Right ventricle myocardium inferior (tissue), 1 donor: ENCODE measurements at regions of chr2 and their contacts with region 1.

Region 1: DNA sequence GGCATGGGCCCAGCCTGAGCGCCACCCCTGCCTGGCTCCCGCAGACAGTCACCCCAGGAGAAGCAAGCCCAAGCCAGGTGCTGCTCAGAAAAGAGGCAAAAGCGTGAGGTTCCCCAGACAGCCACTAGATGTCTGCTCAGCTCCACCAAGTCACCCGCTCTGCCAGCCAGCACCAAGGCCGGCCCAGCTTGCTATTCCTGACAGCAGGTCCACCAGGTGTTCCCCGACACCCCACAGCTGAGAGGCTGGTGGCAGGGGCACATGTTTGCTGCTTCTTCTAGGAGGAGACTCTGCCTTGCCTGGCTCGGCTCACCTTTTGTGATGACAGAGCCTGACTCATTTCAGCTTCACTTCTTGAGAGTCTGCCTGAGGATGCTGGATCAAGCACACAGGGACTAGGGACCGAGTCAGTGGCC is 206.7 kb downstream of the MGAT5 start:
- DNase-seq: peak; percentile 75
- ATAC-seq: peak; percentile 67

Region 2: GRCh38 chr2:133452583-133452982 is 1008.0 kb before region 1 on chr2:
- intact Hi-C with region 1: no loop called
- DNase-seq: no peak
- ATAC-seq: no peak

Region 3: GRCh38 chr2:134504586-134505336 is 44.2 kb after region 1 on chr2:
- intact Hi-C with region 1: no loop called
- DNase-seq: no peak
- ATAC-seq: no peak

Region 4: GRCh38 chr2:134668821-134669220 is 208.2 kb after region 1 on chr2:
- intact Hi-C with region 1: loop called (anchors 5 kb)
- DNase-seq: no peak
- ATAC-seq: peak; percentile 15

Region 5: GRCh38 chr2:134897932-134898331 is 437.3 kb after region 1 on chr2:
- intact Hi-C with region 1: loop called (anchors 5 kb)
- DNase-seq: no peak
- ATAC-seq: no peak